ENCODE measurements at regions of chr5 and their contacts with region 1.

Region 1: GRCh38 chr5:143322176-143322575 is 81.3 kb downstream of the NR3C1 start:
- DNase-seq: no peak
- H3K4me3 ChIP-seq: no peak overlapping the region
- H3K27ac ChIP-seq: no peak overlapping the region
- H3K4me1 ChIP-seq: no peaks in the 10 kb centered on the region
- H3K27me3 ChIP-seq: no peaks in the 10 kb centered on the region
- CTCF ChIP-seq: no peak

Region 2: DNA sequence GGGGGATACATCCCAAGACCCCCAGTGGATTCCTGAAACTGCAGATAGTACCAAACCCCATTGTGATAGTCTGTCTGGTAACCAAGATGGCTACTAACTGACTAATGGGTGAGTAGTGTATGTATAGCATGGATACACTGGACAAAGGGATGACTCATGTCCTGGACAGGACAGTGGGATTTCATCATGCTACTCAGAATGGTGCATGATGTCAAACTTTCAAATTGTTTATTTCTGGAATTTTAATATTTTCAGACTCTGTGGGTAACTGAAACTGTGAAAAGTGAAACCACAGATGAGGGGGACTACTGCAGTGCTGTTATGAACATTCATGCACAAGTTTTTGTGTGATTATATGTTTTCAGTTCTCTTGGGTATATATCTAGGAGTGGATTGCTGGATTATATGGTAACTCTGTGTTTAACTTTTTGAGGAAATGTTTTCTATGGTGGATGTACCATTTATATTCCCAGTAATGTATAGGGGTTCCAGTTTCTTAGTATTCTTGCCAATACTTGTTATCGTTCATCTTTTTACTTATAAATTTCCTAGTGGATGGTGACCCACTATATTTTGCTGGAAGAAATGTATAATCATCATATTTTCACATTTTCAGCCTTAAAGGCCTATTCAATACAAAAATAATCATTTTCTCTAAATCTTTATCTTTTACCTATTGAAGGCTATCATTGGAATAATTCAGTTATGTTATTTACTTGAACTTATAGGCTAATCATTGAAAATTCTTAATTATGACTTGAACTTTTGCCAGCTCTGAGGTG is 59.6 kb before region 1 on chr5:
- CTCF ChIA-PET with region 1: no interaction called
- POLR2A ChIA-PET with region 1: interaction called, 12 read pairs
- intact Hi-C with region 1: no loop called
- DNase-seq: no peak
- H3K4me3 ChIP-seq: no peak overlapping the region
- H3K27ac ChIP-seq: no peak overlapping the region
- H3K4me1 ChIP-seq: no peaks in the 10 kb centered on the region
- H3K27me3 ChIP-seq: no peaks in the 10 kb centered on the region
- CTCF ChIP-seq: no peak

Measured in A673 (cell line).